CD8-positive, alpha-beta T cell (primary cell): ENCODE measurements at regions of chr14 and their contacts with region 1.

Region 1: GRCh38 chr14:103546652-103547454 is 15.6 kb downstream of the BAG5 start:
- DNase-seq: peak; percentile 57 to 87 (median 80)
- ATAC-seq: peak; percentile 91
- H3K4me3 ChIP-seq: no peak overlapping the region
- H3K4me3 Mint-ChIP-seq: no peak overlapping the region
- H3K27ac ChIP-seq: no peak overlapping the region
- H3K27ac Mint-ChIP-seq: no peak overlapping the region
- H3K4me1 ChIP-seq: peaks cover 5% of the 10 kb centered on the region
- H3K4me1 Mint-ChIP-seq: peaks cover 4% of the 10 kb centered on the region
- H3K27me3 ChIP-seq: peaks cover 0 to 4% of the 10 kb centered on the region in 2 experiments
- H3K27me3 Mint-ChIP-seq: peaks cover 2% of the 10 kb centered on the region
- CTCF ChIP-seq: peak; percentile 92

Region 2: DNA sequence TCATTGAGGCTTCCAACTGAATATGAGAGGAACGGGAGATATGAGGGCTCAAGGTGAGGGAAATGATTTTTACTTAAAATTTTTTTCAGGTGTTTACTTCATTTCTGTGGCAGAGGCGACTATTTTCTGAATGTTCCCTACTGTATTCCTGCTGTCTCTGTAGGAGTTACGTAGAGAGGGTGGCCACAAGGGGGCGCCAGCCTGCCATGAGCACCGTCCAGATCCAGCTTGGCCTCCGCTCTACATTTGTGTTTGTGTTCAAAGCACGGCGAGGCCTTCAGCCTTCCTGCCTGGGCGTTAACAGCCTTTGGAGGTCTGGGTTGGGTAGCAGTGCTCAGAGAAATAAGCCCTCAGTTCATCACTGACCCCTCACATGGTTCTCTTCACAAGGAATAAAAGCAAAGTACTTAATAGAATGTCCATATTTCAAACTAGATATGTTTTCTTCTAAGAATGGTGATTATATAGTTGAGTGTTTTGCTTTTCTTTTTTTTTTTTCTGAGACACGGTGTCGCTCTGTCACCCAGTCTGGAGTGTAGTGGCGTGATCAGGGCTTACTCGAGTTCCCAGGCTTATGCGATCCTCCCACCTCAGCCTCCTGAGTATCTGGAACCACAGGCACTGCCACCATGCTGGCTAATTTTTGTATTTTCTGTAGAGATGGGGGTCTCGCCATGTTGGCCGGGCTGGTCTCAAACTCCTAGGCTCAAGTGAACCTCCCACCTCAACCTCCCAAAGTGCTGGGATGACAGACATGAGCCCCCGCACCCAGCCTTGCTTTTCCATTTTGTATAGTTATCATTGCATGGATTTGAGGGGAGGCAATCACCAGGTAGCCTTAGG is 46.5 kb before region 1 on chr14:
- CTCF ChIA-PET with region 1: interaction called, 38 read pairs
- POLR2A ChIA-PET with region 1: no interaction called
- intact Hi-C with region 1: loop called in 1 of 2 experiments (anchors 1 kb)
- DNase-seq: peak; percentile 54 to 86 (median 79)
- ATAC-seq: peak; percentile 95
- H3K4me3 ChIP-seq: no peak overlapping the region
- H3K4me3 Mint-ChIP-seq: no peak overlapping the region
- H3K27ac ChIP-seq: no peak overlapping the region
- H3K27ac Mint-ChIP-seq: peak overlapping the region; percentile 41
- H3K4me1 ChIP-seq: no peaks in the 10 kb centered on the region
- H3K4me1 Mint-ChIP-seq: peaks cover 9% of the 10 kb centered on the region
- H3K27me3 ChIP-seq: no peaks in the 10 kb centered on the region
- H3K27me3 Mint-ChIP-seq: no peaks in the 10 kb centered on the region
- CTCF ChIP-seq: peak; percentile 95

Region 3: DNA sequence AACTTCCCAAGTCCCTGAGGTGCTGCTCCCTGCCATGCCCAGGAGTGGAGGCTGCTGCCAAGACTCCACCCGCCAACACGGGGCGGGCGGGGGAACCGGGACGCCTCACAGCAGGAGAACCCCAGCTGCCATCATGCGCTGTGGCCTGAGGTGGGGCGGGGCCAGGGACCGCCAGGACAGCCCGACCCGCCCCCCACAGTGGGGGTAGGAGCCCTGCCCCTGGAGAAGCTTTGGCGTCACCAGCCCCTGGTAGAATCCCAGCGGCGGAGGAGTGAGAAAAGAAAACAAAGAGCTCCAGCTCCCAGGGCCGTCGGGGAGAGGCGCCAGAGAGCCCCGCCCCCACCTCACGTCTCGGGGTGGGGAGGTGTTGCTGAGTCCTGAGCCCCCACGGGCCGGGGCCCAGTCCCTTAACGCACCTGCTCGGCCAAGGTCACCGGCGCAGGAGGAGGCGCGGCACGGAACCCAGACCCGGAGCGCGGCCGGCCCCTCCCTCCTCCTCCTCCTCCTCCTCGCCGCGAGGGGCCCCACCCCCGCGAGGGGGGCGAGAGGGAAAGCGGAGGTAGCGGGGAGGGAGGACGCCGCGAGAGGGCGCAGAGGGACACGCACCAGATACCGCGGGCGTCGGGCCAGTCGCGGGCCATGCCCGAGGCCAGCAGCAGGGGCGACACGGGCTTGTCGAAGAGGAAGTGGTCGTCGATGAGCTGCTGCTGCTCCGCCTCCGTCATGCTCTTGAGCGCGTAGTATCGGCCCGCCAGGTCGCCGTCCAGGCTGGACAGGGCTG is 26.0 kb before region 1 on chr14:
- CTCF ChIA-PET with region 1: interaction called, 104 read pairs
- POLR2A ChIA-PET with region 1: no interaction called
- intact Hi-C with region 1: loop called (anchors 1 kb)
- DNase-seq: peak; percentile 34 to 87 (median 69)
- ATAC-seq: peak; percentile 79
- H3K4me3 ChIP-seq: peak overlapping the region; percentile 41 to 57
- H3K4me3 Mint-ChIP-seq: peak overlapping the region; percentile 71
- H3K27ac ChIP-seq: no peak overlapping the region
- H3K27ac Mint-ChIP-seq: no peak overlapping the region
- H3K4me1 ChIP-seq: peaks cover 24% of the 10 kb centered on the region
- H3K4me1 Mint-ChIP-seq: peaks cover 10% of the 10 kb centered on the region
- H3K27me3 ChIP-seq: peaks cover 5 to 14% of the 10 kb centered on the region in 2 experiments
- H3K27me3 Mint-ChIP-seq: peaks cover 5% of the 10 kb centered on the region
- CTCF ChIP-seq: peak; percentile 57

Region 4: DNA sequence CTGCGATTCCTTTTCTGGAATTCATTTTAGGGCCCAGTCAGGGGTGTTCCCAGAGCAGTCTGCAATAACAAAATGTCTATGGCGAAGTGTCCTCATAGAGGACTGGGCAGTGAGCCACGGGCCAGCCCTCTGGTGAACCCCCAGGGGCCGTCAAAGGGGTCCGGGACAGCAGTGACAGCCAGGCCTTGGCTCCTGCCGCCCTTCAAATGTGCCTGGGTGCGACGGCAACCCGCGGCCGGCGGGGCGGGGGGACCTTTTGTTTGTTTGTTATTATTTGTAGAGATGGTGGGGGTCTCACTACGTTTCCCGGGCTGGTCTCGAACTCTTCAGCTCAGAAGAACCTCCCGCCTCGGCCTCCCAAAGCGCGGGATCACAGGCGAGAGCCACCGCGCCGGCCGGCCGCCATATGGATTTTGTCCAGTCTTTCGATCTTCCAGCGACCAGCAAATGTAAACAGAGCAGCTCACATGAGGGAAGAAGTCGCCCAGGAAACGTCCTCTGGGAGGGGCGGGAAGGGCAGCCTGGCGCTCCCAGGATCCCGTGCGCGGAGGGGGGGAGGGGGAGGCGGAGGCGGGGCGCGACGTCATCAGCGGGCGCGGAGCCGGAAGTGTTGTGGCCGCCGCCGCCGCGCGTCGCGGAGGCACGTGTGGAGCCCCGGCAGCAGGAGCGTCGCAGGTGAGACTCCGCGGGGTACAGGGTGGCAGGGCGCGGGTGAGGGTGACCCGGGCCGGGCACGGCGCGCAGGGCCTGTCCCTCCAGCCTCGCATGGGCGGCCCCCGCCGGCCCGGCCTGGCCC is 18.1 kb before region 1 on chr14 and contains the start of gene TRMT61A:
- CTCF ChIA-PET with region 1: interaction called, 35 read pairs
- POLR2A ChIA-PET with region 1: interaction called, 3 read pairs
- intact Hi-C with region 1: no loop called
- DNase-seq: peak; percentile 57 to 89 (median 77)
- ATAC-seq: peak; percentile 90
- H3K4me3 ChIP-seq: peak within 1 kb of the TSS; percentile 87 to 92
- H3K4me3 Mint-ChIP-seq: peak within 1 kb of the TSS; percentile 91
- H3K27ac ChIP-seq: peak within 1 kb of the TSS; percentile 77 to 88
- H3K27ac Mint-ChIP-seq: peak within 1 kb of the TSS; percentile 93
- H3K4me1 ChIP-seq: peaks cover 31% of the 10 kb centered on the region
- H3K4me1 Mint-ChIP-seq: peaks cover 37% of the 10 kb centered on the region
- H3K27me3 ChIP-seq: no peaks in the 10 kb centered on the region
- H3K27me3 Mint-ChIP-seq: peaks cover under 1% of the 10 kb centered on the region
- CTCF ChIP-seq: no peak
- total RNA-seq, gene TRMT61A: 10.9 to 11.6 TPM

Region 5: GRCh38 chr14:103576371-103577024 is 29.6 kb after region 1 on chr14:
- CTCF ChIA-PET with region 1: no interaction called
- POLR2A ChIA-PET with region 1: no interaction called
- intact Hi-C with region 1: no loop called
- DNase-seq: no peak
- ATAC-seq: no peak
- H3K4me3 ChIP-seq: no peak overlapping the region
- H3K4me3 Mint-ChIP-seq: no peak overlapping the region
- H3K27ac ChIP-seq: no peak overlapping the region
- H3K27ac Mint-ChIP-seq: no peak overlapping the region
- H3K4me1 ChIP-seq: no peaks in the 10 kb centered on the region
- H3K4me1 Mint-ChIP-seq: no peaks in the 10 kb centered on the region
- H3K27me3 ChIP-seq: no peaks in the 10 kb centered on the region
- H3K27me3 Mint-ChIP-seq: no peaks in the 10 kb centered on the region
- CTCF ChIP-seq: no peak

Region 6: GRCh38 chr14:103668117-103668516 is 121.3 kb after region 1 on chr14:
- CTCF ChIA-PET with region 1: no interaction called
- POLR2A ChIA-PET with region 1: no interaction called
- intact Hi-C with region 1: no loop called
- DNase-seq: no peak
- ATAC-seq: no peak
- H3K4me3 ChIP-seq: no peak overlapping the region
- H3K4me3 Mint-ChIP-seq: no peak overlapping the region
- H3K27ac ChIP-seq: no peak overlapping the region
- H3K27ac Mint-ChIP-seq: no peak overlapping the region
- H3K4me1 ChIP-seq: no peaks in the 10 kb centered on the region
- H3K4me1 Mint-ChIP-seq: no peaks in the 10 kb centered on the region
- H3K27me3 ChIP-seq: no peaks in the 10 kb centered on the region
- H3K27me3 Mint-ChIP-seq: no peaks in the 10 kb centered on the region
- CTCF ChIP-seq: no peak